ENCODE measurements at regions of chr20 and their contacts with region 1.

Region 1: GRCh38 chr20:33666293-33667244 is at the start of gene ACTL10:
- DNase-seq: peak; percentile 83
- ATAC-seq: peak; percentile 75
- H3K4me3 Mint-ChIP-seq: peak within 1 kb of the TSS; percentile 93
- H3K27ac Mint-ChIP-seq: peak within 1 kb of the TSS; percentile 95
- H3K4me1 Mint-ChIP-seq: peaks cover 34% of the 10 kb centered on the region
- H3K27me3 Mint-ChIP-seq: no peaks in the 10 kb centered on the region
- CTCF ChIP-seq: no peak
- total RNA-seq, gene ACTL10: 2.8 and 3.9 TPM in 2 replicates

Region 2: DNA sequence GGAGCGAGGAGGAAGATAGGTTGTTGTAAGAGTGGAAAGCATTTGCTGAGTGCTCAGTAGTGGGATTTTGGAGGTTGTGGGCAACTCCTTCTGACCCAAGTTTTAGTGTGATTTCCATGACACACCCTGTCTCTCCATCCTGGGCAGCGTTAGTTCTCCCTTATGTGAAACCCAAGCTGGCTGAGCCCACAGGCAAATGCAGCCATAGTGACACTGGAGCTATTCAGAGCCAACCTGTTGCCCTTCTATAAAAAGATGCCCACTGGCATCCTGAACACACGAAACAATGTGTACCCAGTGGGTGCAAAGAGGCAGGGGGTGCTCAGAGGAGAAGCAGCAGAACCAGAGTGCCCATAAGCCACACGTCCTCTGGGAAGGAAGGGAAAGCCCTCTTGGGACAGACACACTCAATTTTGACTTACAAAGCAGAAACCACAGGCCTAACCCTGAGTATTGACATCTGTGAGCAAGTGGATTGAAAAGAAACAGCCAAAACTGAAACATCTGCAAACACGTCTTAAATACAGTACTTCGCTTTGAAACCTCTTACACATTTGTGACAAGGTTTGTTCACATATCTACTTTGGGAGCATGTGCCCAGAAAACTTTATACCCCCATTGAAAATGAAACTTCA is 328.9 kb before region 1 on chr20:
- CTCF ChIA-PET with region 1: no interaction called
- POLR2A ChIA-PET with region 1: no interaction called
- intact Hi-C with region 1: no loop called
- DNase-seq: no peak
- ATAC-seq: no peak
- H3K4me3 Mint-ChIP-seq: no peak overlapping the region
- H3K27ac Mint-ChIP-seq: no peak overlapping the region
- H3K4me1 Mint-ChIP-seq: peaks cover 13% of the 10 kb centered on the region
- H3K27me3 Mint-ChIP-seq: peaks cover 6% of the 10 kb centered on the region
- CTCF ChIP-seq: no peak

Region 3: GRCh38 chr20:33401184-33401920 is 265.2 kb before region 1 on chr20 and contains the start of gene CDK5RAP1:
- CTCF ChIA-PET with region 1: interaction called, 5 read pairs
- POLR2A ChIA-PET with region 1: interaction called, 12 read pairs
- intact Hi-C with region 1: loop called (anchors 2 kb)
- DNase-seq: peak; percentile 76
- ATAC-seq: peak; percentile 99
- H3K4me3 Mint-ChIP-seq: peak within 1 kb of the TSS; percentile 94
- H3K27ac Mint-ChIP-seq: peak within 1 kb of the TSS; percentile 90
- H3K4me1 Mint-ChIP-seq: peaks cover 41% of the 10 kb centered on the region
- H3K27me3 Mint-ChIP-seq: no peaks in the 10 kb centered on the region
- CTCF ChIP-seq: no peak
- total RNA-seq, gene CDK5RAP1: 44.2 and 50.5 TPM in 2 replicates

Region 4: DNA sequence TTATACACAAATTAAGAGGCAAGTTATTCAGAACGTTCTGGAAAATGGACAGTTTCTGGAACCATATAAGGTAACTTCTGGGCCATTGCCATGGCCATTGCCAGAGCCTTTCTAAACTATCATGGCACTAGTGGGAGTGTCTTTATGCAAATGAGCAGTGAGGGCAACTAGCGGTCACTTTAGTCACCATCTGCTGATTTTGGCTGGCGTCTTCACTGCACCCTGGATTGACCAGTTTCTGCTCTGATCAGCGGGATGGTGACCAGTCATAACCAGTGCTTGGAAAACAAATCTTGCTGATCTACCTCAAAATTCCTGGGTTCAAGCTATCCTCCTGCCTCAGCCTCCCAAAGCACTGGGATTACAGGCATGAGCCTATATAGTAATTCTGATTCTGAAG is 215.7 kb before region 1 on chr20:
- CTCF ChIA-PET with region 1: interaction called, 17 read pairs
- POLR2A ChIA-PET with region 1: no interaction called
- intact Hi-C with region 1: no loop called
- DNase-seq: no peak
- ATAC-seq: no peak
- H3K4me3 Mint-ChIP-seq: no peak overlapping the region
- H3K27ac Mint-ChIP-seq: no peak overlapping the region
- H3K4me1 Mint-ChIP-seq: peaks cover 3% of the 10 kb centered on the region
- H3K27me3 Mint-ChIP-seq: no peaks in the 10 kb centered on the region
- CTCF ChIP-seq: no peak

Region 5: GRCh38 chr20:33606118-33606771 is 60.3 kb before region 1 on chr20:
- CTCF ChIA-PET with region 1: no interaction called
- POLR2A ChIA-PET with region 1: no interaction called
- intact Hi-C with region 1: no loop called
- DNase-seq: peak; percentile 16
- ATAC-seq: peak; percentile 69
- H3K4me3 Mint-ChIP-seq: peak overlapping the region; percentile 52
- H3K27ac Mint-ChIP-seq: peak overlapping the region; percentile 87
- H3K4me1 Mint-ChIP-seq: peaks cover 86% of the 10 kb centered on the region
- H3K27me3 Mint-ChIP-seq: no peaks in the 10 kb centered on the region
- CTCF ChIP-seq: no peak

Region 6: GRCh38 chr20:33624399-33624798 is 42.2 kb before region 1 on chr20:
- CTCF ChIA-PET with region 1: no interaction called
- POLR2A ChIA-PET with region 1: no interaction called
- intact Hi-C with region 1: no loop called
- DNase-seq: no peak
- ATAC-seq: no peak
- H3K4me3 Mint-ChIP-seq: no peak overlapping the region
- H3K27ac Mint-ChIP-seq: peak overlapping the region; percentile 22
- H3K4me1 Mint-ChIP-seq: peaks cover 20% of the 10 kb centered on the region
- H3K27me3 Mint-ChIP-seq: no peaks in the 10 kb centered on the region
- CTCF ChIP-seq: no peak

Region 7: DNA sequence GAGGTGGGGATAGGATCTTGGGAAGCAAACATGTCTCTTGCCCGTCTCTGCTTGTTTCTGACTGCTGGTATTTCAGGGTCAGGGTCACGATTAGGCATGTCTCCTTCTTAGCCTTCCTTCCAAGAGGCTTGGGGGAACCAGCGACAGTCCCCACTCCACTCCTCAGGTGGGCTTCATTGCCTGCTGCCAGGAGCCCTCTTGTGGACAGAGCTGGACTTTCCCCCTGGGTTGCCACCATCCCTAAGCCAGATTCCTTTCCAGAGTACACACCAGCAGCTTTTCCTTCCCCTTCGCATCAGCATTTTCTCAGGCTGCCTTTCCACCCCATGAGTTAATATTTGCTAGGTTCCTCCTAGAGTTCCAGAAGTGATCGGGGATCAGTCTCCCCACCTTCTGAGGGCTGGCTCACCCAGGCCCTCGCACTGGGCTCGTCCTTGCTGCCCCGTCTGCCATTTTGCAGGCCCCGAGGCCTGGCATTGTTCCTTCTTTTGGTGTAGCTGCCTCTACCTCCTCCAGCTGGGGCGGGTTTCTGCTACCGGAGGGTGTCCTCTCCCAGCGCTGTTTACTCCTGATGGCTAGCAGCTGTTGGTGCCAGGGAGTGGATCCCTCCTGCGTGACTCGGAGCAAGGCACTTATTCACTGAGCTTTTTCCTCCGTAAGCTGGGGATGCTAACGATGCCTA is 13.2 kb before region 1 on chr20:
- CTCF ChIA-PET with region 1: interaction called, 21 read pairs
- POLR2A ChIA-PET with region 1: interaction called, 5 read pairs
- intact Hi-C with region 1: no loop called
- DNase-seq: no peak
- ATAC-seq: peak; percentile 88
- H3K4me3 Mint-ChIP-seq: no peak overlapping the region
- H3K27ac Mint-ChIP-seq: peak overlapping the region; percentile 18
- H3K4me1 Mint-ChIP-seq: peaks cover 11% of the 10 kb centered on the region
- H3K27me3 Mint-ChIP-seq: no peaks in the 10 kb centered on the region
- CTCF ChIP-seq: no peak

Region 8: GRCh38 chr20:33731693-33732165 is 65.2 kb after region 1 on chr20 and contains the start of gene ZNF341:
- CTCF ChIA-PET with region 1: interaction called, 5 read pairs
- POLR2A ChIA-PET with region 1: interaction called, 15 read pairs
- intact Hi-C with region 1: loop called (anchors 1 kb)
- DNase-seq: no peak
- ATAC-seq: peak; percentile 79
- H3K4me3 Mint-ChIP-seq: peak within 1 kb of the TSS; percentile 90
- H3K27ac Mint-ChIP-seq: peak within 1 kb of the TSS; percentile 93
- H3K4me1 Mint-ChIP-seq: peaks cover 26% of the 10 kb centered on the region
- H3K27me3 Mint-ChIP-seq: no peaks in the 10 kb centered on the region
- CTCF ChIP-seq: no peak
- total RNA-seq, gene ZNF341: 9.2 and 10.1 TPM in 2 replicates

Region 9: DNA sequence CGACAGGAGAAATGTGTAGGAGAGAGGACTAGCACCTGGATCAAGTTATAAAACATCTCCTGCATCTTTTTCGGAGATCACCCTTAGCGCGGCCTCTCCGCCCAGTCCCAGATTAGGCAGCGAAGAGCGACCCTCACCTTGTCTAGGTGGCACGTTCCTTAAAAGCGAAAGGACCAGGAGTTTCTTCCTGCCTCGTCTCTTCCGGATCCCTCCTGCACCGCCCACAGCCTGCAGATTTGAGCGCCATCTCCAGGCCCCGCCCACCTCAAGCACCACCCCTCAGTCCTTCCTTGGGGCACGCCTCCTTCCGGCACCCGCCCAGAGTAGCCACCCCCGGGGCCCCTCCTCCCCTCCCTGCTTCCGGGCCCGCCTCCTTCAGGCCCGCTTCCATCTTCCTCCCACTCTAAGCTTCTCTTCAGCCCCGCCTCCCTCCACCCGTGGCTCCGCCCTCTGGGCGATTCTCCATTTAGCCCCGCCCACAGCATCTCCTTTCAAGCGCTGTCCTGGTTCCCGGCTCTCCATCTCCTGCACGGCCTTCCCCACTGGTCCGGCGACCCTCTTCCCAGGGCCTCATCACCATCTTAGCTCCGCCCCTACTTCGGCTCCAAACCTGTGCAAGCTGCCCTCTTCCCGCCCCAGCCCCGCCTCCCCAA is 326.5 kb after region 1 on chr20:
- CTCF ChIA-PET with region 1: no interaction called
- POLR2A ChIA-PET with region 1: interaction called, 11 read pairs
- intact Hi-C with region 1: loop called (anchors 5 kb)
- DNase-seq: peak; percentile 98
- ATAC-seq: peak; percentile 84
- H3K4me3 Mint-ChIP-seq: peak overlapping the region; percentile 95
- H3K27ac Mint-ChIP-seq: peak overlapping the region; percentile 98
- H3K4me1 Mint-ChIP-seq: peaks cover 60% of the 10 kb centered on the region
- H3K27me3 Mint-ChIP-seq: no peaks in the 10 kb centered on the region
- CTCF ChIP-seq: no peak

Region 10: DNA sequence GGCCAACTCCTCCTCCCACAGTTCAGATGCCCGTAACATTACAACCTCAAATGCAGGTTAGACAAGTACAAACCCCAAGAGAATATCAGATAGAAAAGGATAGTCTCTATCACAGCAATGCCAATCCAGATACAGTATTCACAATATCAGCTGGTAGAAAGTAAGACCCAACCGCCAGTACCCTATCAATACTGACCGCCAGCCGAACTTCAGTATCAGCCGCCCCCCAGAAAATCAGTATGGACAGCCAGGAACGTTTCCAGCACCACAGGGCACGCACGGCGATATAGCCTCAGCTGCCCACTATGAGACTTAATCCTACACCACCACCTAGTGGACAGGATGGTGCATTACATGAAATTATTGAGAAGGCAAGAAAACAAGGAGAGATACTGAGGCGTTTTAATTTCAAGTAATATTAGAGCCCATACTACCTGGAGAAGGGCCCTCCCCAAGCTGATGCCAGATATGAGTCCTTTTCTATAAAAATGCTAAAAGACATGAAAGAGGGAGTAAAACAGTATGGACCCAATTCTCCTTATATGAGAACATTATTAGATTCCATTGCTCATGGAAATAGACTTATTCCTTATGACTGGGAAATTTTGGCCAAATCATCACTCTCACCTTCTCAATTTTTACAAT is 463.1 kb after region 1 on chr20:
- CTCF ChIA-PET with region 1: interaction called, 6 read pairs
- POLR2A ChIA-PET with region 1: no interaction called
- intact Hi-C with region 1: loop called (anchors 2 kb)
- DNase-seq: peak; percentile 32
- ATAC-seq: peak; percentile 95
- H3K4me3 Mint-ChIP-seq: peak overlapping the region; percentile 3
- H3K27ac Mint-ChIP-seq: no peak overlapping the region
- H3K4me1 Mint-ChIP-seq: peaks cover 5% of the 10 kb centered on the region
- H3K27me3 Mint-ChIP-seq: peaks cover 11% of the 10 kb centered on the region
- CTCF ChIP-seq: no peak

Measured in activated B cell treated with CpG ODN at 0.5 μM for 24 hours (primary cell).